ENCODE measurements at regions of chr5 and their contacts with region 1.

Region 1: GRCh38 chr5:14816999-14817761 is 54.4 kb downstream of the ANKH start:
- DNase-seq: peak; percentile 92
- H3K4me3 Mint-ChIP-seq: peak overlapping the region; percentile 34
- H3K27ac Mint-ChIP-seq: peak overlapping the region; percentile 80
- H3K4me1 Mint-ChIP-seq: peaks cover 26% of the 10 kb centered on the region
- H3K27me3 Mint-ChIP-seq: no peaks in the 10 kb centered on the region
- CTCF ChIP-seq: no peak

Region 2: GRCh38 chr5:14871210-14872069 is 54.3 kb after region 1 on chr5 and contains the start of gene ANKH:
- CTCF ChIA-PET with region 1: interaction called, 4 read pairs
- POLR2A ChIA-PET with region 1: interaction called, 22 read pairs
- intact Hi-C with region 1: loop called (anchors 2 kb)
- DNase-seq: peak; percentile 72
- H3K4me3 Mint-ChIP-seq: peak within 1 kb of the TSS; percentile 80
- H3K27ac Mint-ChIP-seq: peak within 1 kb of the TSS; percentile 63
- H3K4me1 Mint-ChIP-seq: peaks cover 15% of the 10 kb centered on the region
- H3K27me3 Mint-ChIP-seq: no peaks in the 10 kb centered on the region
- CTCF ChIP-seq: no peak
- total RNA-seq, gene ANKH: 51.3 and 65.7 TPM in 2 replicates